Right ventricle myocardium inferior (tissue), 1 donor: ENCODE measurements at regions of chr5 and their contacts with region 1.

Region 1: GRCh38 chr5:12947379-12947778 is 997.1 kb downstream of the DNAH5 start:
- DNase-seq: no peak
- ATAC-seq: no peak

Region 2: DNA sequence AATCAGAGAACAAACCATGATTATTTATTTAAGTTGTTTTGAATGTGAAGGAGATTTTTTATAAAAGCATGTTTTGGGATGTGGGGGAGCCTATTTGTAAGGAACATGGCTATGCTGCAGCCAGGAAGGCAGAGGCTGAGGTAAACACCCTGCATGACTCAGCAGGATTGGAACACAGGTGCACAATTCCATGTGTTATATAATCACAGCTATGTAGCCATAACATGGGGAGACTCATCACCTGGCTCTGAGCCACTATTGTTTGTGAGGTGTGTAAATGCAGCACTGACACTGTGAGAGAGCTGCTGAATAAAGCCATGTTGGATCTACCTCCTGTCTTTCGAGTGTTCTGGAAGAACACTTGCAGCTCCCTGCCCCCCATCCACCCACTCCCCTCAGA is 12.7 kb before region 1 on chr5:
- intact Hi-C with region 1: loop called (anchors 1 kb)
- DNase-seq: no peak
- ATAC-seq: no peak